ENCODE measurements at regions of chr22 and their contacts with region 1.

Region 1: GRCh38 chr22:29359469-29359868 is 28.9 kb downstream of the AP1B1 start:
- DNase-seq: peak; percentile 53
- ATAC-seq: peak; percentile 91
- H3K4me3 ChIP-seq: no peak overlapping the region
- H3K27ac ChIP-seq: no peak overlapping the region
- H3K4me1 ChIP-seq: no peaks in the 10 kb centered on the region
- H3K27me3 ChIP-seq: no peaks in the 10 kb centered on the region
- CTCF ChIP-seq: peak; percentile 62
- POLR2A ChIP-seq: no peak
- RAD21 ChIP-seq: peak; percentile 61

Region 2: GRCh38 chr22:29306175-29306834 is 53.2 kb before region 1 on chr22 and contains the start of gene GAS2L1:
- CTCF ChIA-PET with region 1: no interaction called
- POLR2A ChIA-PET with region 1: no interaction called
- dilution Hi-C with region 1: no loop called
- in situ Hi-C with region 1: no loop called
- intact Hi-C with region 1: loop called (anchors 1 kb)
- DNase-seq: peak; percentile 73
- ATAC-seq: peak; percentile 70
- H3K4me3 ChIP-seq: peak within 1 kb of the TSS; percentile 67
- H3K27ac ChIP-seq: peak within 1 kb of the TSS; percentile 74
- H3K4me1 ChIP-seq: peaks cover 17% of the 10 kb centered on the region
- H3K27me3 ChIP-seq: no peaks in the 10 kb centered on the region
- CTCF ChIP-seq: peak; percentile 82
- POLR2A ChIP-seq: 0 out of 2 replicates have a peak, but pooled peaks have one; percentile 11
- RAD21 ChIP-seq: peak; percentile 68
- total RNA-seq, gene GAS2L1: 1.4 TPM in 2 replicates

Region 3: GRCh38 chr22:29744902-29745301 is 385.4 kb after region 1 on chr22:
- CTCF ChIA-PET with region 1: no interaction called
- POLR2A ChIA-PET with region 1: no interaction called
- dilution Hi-C with region 1: no loop called
- in situ Hi-C with region 1: no loop called
- intact Hi-C with region 1: no loop called
- DNase-seq: peak; percentile 70
- ATAC-seq: peak; percentile 77
- H3K4me3 ChIP-seq: no peak overlapping the region
- H3K27ac ChIP-seq: no peak overlapping the region
- H3K4me1 ChIP-seq: peaks cover 5% of the 10 kb centered on the region; the same call in 1 of the 2 replicates
- H3K27me3 ChIP-seq: no peaks in the 10 kb centered on the region
- CTCF ChIP-seq: no peak
- POLR2A ChIP-seq: no peak
- RAD21 ChIP-seq: no peak